ENCODE measurements at regions of chr15 and their contacts with region 1.

Region 1: GRCh38 chr15:55108858-55109518 is 87.8 kb downstream of the RSL24D1 start:
- DNase-seq: peak; percentile 66 to 88 (median 78)
- H3K4me3 ChIP-seq: peak overlapping the region in 1 of 59 donors; percentile 8
- H3K27ac ChIP-seq: peak overlapping the region in 1 of 59 donors; percentile 71
- H3K27me3 ChIP-seq: no peaks in the 10 kb centered on the region
- CTCF ChIP-seq: peak; percentile 28 to 84 (median 69)

Region 2: DNA sequence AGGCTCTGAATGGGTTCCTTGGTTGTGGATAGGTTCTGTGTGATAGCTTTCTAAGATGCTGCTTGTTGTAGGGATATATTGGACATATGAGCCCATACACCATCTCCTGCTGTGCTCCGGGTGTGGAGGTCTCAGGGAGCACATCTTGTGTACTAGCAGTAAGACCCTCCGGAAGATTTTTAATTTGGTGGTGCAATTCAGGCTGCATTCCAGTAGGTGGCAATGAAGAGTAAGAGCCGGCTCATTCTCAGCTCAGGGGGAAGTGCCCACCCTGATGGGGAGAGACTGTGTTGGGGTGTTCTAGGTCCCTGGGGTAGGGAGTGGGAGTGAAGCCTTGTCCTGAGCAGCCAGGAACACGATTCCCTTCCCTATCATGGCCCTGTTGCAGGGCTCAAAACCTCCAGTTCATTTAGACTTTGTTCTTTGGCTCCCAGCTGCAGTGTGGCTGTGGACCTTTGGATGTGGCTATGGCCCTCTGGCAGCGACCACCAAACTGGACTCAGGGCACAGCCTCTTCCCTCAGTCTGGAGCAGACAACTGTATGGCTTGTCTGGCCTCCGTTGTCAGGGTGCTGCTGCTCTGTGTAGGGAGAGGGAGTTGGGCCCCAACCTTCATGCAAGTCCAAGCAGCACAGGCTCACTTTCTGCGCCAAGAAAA is 1026.0 kb before region 1 on chr15:
- intact Hi-C with region 1: loop called in 1 of 2 experiments (anchors 10 kb)
- DNase-seq: no peak
- H3K4me3 ChIP-seq: no peak overlapping the region
- H3K27ac ChIP-seq: no peak overlapping the region
- H3K27me3 ChIP-seq: peaks cover 0 to 13% (median 0%) of the 10 kb centered on the region in 45 donors
- CTCF ChIP-seq: peak; percentile 24 to 69 (median 55)

Region 3: GRCh38 chr15:54990793-54991192 is 118.2 kb before region 1 on chr15:
- intact Hi-C with region 1: no loop called
- DNase-seq: no peak
- H3K4me3 ChIP-seq: no peak overlapping the region
- H3K27ac ChIP-seq: no peak overlapping the region
- H3K27me3 ChIP-seq: no peaks in the 10 kb centered on the region
- CTCF ChIP-seq: no peak

Region 4: GRCh38 chr15:55007561-55007960 is 101.4 kb before region 1 on chr15:
- intact Hi-C with region 1: no loop called
- DNase-seq: peak in 3 of 10 donors; percentile 28 to 31 (median 30)
- H3K4me3 ChIP-seq: no peak overlapping the region
- H3K27ac ChIP-seq: no peak overlapping the region
- H3K27me3 ChIP-seq: peaks cover 0 to 1% (median 0%) of the 10 kb centered on the region in 45 donors
- CTCF ChIP-seq: no peak

Measured in dorsolateral prefrontal cortex (tissue), 120 donors.